ENCODE measurements at regions of chr15 and their contacts with region 1.

Region 1: DNA sequence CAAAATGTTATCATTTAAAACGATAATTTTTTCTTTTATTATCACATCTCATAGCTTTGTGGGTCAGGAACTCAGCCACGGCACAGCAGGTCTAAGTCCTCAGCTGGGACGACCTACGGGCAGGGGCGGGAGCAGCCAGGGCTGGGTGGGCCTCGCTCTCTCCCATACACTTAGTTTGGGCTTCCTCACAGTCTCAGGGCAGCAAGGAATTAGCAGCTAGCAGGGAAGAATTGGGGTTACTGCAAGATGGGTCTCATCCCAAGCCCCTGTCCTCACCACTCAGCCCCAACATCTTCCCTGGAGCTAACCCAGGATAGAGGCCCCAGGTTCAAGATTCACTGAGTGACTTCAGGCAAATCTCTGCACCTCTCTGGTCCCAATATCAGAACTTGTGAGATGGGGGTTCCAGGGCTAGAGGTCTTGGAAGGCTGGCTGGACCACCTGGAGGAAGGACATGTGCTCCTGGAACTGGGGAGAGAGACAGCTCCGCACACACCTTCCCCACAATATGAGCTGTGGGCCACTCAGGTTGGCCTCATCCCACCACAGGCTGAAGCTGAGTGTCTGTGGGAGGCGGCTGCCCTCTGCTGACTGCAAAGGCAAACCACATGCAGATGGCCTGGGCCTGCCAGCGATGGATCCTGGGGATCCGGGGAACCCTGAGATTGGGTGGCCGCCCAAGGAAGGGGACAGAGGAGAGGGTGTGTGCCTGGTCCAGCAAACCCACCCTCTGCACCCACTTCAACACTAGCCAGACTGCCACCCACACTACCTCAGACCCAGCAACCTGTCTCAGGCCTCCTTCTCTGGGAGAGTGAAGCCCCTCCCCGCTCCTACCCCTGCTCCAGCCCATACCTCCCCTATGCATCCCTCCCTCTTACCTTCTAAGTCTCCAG is 45.0 kb downstream of the CYP11A1 start:
- DNase-seq: peak; percentile 52
- H3K4me3 ChIP-seq: no peak overlapping the region
- H3K27ac ChIP-seq: no peak overlapping the region
- H3K4me1 ChIP-seq: peaks cover 0 to 20% (median 3%) of the 10 kb centered on the region in 4 donors
- H3K27me3 ChIP-seq: no peaks in the 10 kb centered on the region
- CTCF ChIP-seq: peak; percentile 68 to 79 (median 76)
- EP300 ChIP-seq: no peak
- POLR2A ChIP-seq: no peak

Region 2: GRCh38 chr15:73927476-73928240 is 394.8 kb before region 1 on chr15:
- in situ Hi-C with region 1: loop called in 1 of 4 experiments (anchors 25 kb)
- intact Hi-C with region 1: no loop called
- DNase-seq: peak; percentile 70
- H3K4me3 ChIP-seq: peak overlapping the region; percentile 4 to 62 (median 50)
- H3K27ac ChIP-seq: peak overlapping the region; percentile 77 to 92 (median 81)
- H3K4me1 ChIP-seq: peaks cover 19 to 71% (median 50%) of the 10 kb centered on the region in 4 donors
- H3K27me3 ChIP-seq: peaks cover 10% of the 10 kb centered on the region
- CTCF ChIP-seq: peak; percentile 7 to 50 (median 42)
- EP300 ChIP-seq: no peak
- POLR2A ChIP-seq: no peak

Region 3: GRCh38 chr15:73964736-73965093 is 357.7 kb before region 1 on chr15:
- in situ Hi-C with region 1: loop called in 1 of 4 experiments (anchors 25 kb)
- intact Hi-C with region 1: no loop called
- DNase-seq: peak; percentile 86
- H3K4me3 ChIP-seq: peak overlapping the region in 1 of 4 donors; percentile 26
- H3K27ac ChIP-seq: peak overlapping the region in 2 of 4 donors; percentile 29 to 59
- H3K4me1 ChIP-seq: peaks cover 0 to 15% (median 7%) of the 10 kb centered on the region in 4 donors
- H3K27me3 ChIP-seq: peaks cover 5% of the 10 kb centered on the region
- CTCF ChIP-seq: peak; percentile 88 to 95 (median 93)
- EP300 ChIP-seq: no peak
- POLR2A ChIP-seq: no peak

Region 4: GRCh38 chr15:73972984-73973682 is 349.3 kb before region 1 on chr15:
- in situ Hi-C with region 1: loop called in 1 of 4 experiments (anchors 25 kb)
- intact Hi-C with region 1: loop called (anchors 10 kb)
- DNase-seq: peak; percentile 90
- H3K4me3 ChIP-seq: peak overlapping the region in 1 of 4 donors; percentile 21
- H3K27ac ChIP-seq: no peak overlapping the region
- H3K4me1 ChIP-seq: peaks cover 0 to 16% (median 4%) of the 10 kb centered on the region in 4 donors
- H3K27me3 ChIP-seq: peaks cover 32% of the 10 kb centered on the region
- CTCF ChIP-seq: peak; percentile 80 to 88 (median 85)
- EP300 ChIP-seq: no peak
- POLR2A ChIP-seq: no peak

Region 5: GRCh38 chr15:74127260-74127953 is 195.0 kb before region 1 on chr15:
- in situ Hi-C with region 1: loop called in 1 of 4 experiments (anchors 25 kb)
- intact Hi-C with region 1: no loop called
- DNase-seq: peak; percentile 87
- H3K4me3 ChIP-seq: peak overlapping the region in 3 of 4 donors; percentile 15 to 33 (median 29)
- H3K27ac ChIP-seq: no peak overlapping the region
- H3K4me1 ChIP-seq: peaks cover 3 to 21% (median 8%) of the 10 kb centered on the region in 4 donors
- H3K27me3 ChIP-seq: peaks cover 86% of the 10 kb centered on the region
- CTCF ChIP-seq: peak; percentile 89 to 98 (median 97)
- EP300 ChIP-seq: no peak
- POLR2A ChIP-seq: no peak

Region 6: GRCh38 chr15:74213858-74214284 is 108.6 kb before region 1 on chr15:
- in situ Hi-C with region 1: no loop called
- intact Hi-C with region 1: no loop called
- DNase-seq: no peak
- H3K4me3 ChIP-seq: no peak overlapping the region
- H3K27ac ChIP-seq: no peak overlapping the region
- H3K4me1 ChIP-seq: no peaks in the 10 kb centered on the region
- H3K27me3 ChIP-seq: no peaks in the 10 kb centered on the region
- CTCF ChIP-seq: no peak
- EP300 ChIP-seq: no peak
- POLR2A ChIP-seq: no peak

Region 7: DNA sequence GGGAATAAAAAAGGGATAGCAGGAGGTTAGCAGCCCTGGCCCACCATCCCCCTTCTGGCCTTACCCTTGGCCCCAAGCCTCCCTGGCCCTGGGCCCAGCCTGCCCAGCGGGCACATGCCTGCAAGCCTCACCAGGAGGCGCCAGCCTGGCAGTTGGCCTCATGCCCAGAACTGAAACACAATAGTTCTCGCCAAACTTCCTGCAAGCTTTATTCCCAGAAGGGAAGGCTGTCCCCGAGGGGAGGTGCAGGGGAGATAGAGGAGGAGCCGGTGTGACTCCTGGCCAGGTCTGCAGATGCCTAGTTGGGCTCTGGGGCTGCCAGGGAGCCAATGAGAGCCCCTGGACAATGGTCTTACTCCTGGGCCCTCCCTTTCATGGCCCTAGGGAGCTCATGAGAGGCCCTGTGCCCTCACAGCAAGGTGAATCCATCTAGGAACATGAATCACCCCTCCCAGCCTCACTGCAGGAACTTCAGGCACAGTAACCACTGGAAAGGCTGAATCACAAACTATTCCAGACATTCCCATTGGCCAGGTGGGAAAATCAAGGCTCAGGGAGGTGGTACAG is 82.3 kb before region 1 on chr15:
- in situ Hi-C with region 1: no loop called
- intact Hi-C with region 1: no loop called
- DNase-seq: peak; percentile 88
- H3K4me3 ChIP-seq: no peak overlapping the region
- H3K27ac ChIP-seq: peak overlapping the region in 3 of 4 donors; percentile 28 to 56 (median 49)
- H3K4me1 ChIP-seq: peaks cover 6 to 23% (median 15%) of the 10 kb centered on the region in 4 donors
- H3K27me3 ChIP-seq: peaks cover under 1% of the 10 kb centered on the region
- CTCF ChIP-seq: peak; percentile 42 to 69 (median 54)
- EP300 ChIP-seq: no peak
- POLR2A ChIP-seq: no peak